CD14-positive monocyte (primary cell): ENCODE measurements at regions of chr12 and their contacts with region 1.

Region 1: DNA sequence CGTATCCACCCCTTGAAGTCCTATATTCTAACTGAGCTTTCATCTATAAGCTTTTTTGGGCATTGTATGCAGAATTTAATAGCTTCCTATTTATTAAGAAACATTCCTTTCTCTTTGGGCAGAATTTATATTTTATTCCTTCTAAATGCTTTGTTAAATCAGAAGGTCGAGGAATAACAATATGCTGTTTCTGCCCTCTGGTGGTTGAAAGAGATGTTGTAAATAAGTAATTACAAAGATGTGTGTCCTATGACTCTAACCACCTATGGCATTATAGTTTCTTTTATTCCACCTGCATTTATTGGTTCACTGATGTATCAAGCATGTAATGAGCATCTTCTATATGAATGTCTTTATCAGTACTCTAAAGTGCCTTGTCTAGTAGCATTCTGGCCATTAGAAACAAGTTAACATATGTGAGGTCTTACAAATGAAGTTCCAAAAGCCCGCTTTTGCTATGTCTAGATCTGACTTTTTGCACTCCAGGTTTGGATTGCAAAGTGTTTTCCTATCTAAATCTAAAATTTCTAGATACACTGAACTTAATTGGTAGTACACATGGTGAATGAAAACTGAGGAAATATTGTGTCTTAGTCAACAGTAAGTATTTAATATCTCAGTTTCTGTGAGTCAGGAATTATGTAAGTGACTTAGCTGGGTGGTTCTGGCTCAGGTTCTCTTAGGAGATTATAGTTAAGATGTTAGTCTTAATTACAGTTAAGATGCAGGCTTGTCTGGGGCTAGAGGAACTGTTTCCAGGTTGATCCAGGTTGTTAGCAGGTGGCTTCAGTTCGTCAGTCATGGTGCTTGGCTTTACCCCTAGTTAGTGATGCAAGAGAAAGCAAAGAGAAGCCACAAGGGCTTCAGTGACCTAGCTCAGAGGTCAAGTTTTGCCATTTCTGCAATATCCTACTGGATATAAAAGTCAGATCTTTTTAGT is 57.5 kb downstream of the PLEKHA5 start:
- DNase-seq: peak in 2 of 3 donors; percentile 31 to 38
- H3K4me3 ChIP-seq: no peak overlapping the region
- H3K4me3 Mint-ChIP-seq: no peak overlapping the region
- H3K27ac ChIP-seq: no peak overlapping the region
- H3K27ac Mint-ChIP-seq: peak overlapping the region in 4 of 7 donors; percentile 2 to 61 (median 20)
- H3K4me1 ChIP-seq: peaks cover 35 to 43% of the 10 kb centered on the region in 2 donors
- H3K4me1 Mint-ChIP-seq: peaks cover 37% of the 10 kb centered on the region
- H3K27me3 ChIP-seq: no peaks in the 10 kb centered on the region
- H3K27me3 Mint-ChIP-seq: no peaks in the 10 kb centered on the region
- CTCF ChIP-seq: peak; percentile 82

Region 2: GRCh38 chr12:18861287-18861858 is 325.6 kb before region 1 on chr12:
- intact Hi-C with region 1: loop called in 1 of 2 experiments (anchors 10 kb)
- DNase-seq: peak in 1 of 3 donors; percentile 5
- H3K4me3 ChIP-seq: no peak overlapping the region
- H3K4me3 Mint-ChIP-seq: no peak overlapping the region
- H3K27ac ChIP-seq: no peak overlapping the region
- H3K27ac Mint-ChIP-seq: no peak overlapping the region
- H3K4me1 ChIP-seq: no peaks in the 10 kb centered on the region
- H3K4me1 Mint-ChIP-seq: no peaks in the 10 kb centered on the region
- H3K27me3 ChIP-seq: no peaks in the 10 kb centered on the region
- H3K27me3 Mint-ChIP-seq: peaks cover 0 to 2% (median 0%) of the 10 kb centered on the region in 3 donors
- CTCF ChIP-seq: peak; percentile 71